Left lung (tissue), 14 donors: ENCODE measurements at regions of chr1 and their contacts with region 1.

Region 1: GRCh38 chr1:150561974-150562445 is 12.8 kb downstream of the ADAMTSL4 start:
- DNase-seq: peak; percentile 86 to 98 (median 96)
- ATAC-seq: peak; percentile 76
- H3K4me3 ChIP-seq: peak overlapping the region; percentile 33 to 50
- H3K27ac ChIP-seq: peak overlapping the region; percentile 100
- H3K4me1 ChIP-seq: peaks cover 61 to 87% of the 10 kb centered on the region in 2 donors
- H3K27me3 ChIP-seq: no peaks in the 10 kb centered on the region
- CTCF ChIP-seq: no peak

Region 2: DNA sequence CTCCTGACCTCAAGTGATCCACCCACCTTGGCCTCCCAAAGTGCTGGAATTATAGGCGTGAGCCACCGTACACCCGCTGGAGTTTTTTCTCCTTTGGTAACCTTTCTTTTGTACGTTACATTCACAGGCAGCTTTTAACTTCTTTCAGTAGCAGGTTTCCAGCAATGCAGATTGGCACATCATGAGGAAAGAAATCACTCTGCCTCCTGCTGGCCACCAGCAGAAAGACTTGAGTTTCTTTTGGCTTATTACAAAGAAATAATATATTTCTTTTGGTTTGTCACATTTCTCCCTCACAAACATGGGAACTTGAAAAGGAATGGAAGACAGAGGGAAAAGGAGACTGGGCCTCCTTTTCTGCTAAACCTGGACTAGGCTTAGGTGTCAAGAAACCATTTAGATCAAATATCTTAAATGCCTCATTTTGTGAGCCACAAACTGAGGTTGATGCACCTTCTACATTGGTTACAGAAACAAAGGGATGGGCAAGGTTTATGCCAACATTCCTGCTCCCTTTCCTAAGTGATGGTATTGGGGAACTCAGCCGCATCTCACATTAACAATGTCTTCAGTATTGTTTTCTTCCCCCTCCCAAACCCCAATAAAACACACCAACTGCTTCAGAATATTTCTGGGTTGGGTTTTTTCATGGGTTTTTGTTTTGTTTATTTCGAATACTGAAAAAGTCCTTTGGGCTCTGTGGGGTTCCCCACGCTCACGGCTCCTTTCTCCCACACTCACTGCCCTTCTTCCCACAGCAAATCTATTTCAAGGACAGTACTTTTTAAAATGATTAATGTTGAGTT is 59.7 kb after region 1 on chr1:
- intact Hi-C with region 1: loop called in 1 of 2 experiments (anchors 5 kb)
- DNase-seq: peak in 3 of 4 donors; percentile 40 to 61 (median 45)
- ATAC-seq: peak; percentile 51
- H3K4me3 ChIP-seq: no peak overlapping the region
- H3K27ac ChIP-seq: peak overlapping the region; percentile 62 to 63
- H3K4me1 ChIP-seq: peaks cover 30 to 81% of the 10 kb centered on the region in 2 donors
- H3K27me3 ChIP-seq: no peaks in the 10 kb centered on the region
- CTCF ChIP-seq: peak; percentile 69 to 74

Region 3: DNA sequence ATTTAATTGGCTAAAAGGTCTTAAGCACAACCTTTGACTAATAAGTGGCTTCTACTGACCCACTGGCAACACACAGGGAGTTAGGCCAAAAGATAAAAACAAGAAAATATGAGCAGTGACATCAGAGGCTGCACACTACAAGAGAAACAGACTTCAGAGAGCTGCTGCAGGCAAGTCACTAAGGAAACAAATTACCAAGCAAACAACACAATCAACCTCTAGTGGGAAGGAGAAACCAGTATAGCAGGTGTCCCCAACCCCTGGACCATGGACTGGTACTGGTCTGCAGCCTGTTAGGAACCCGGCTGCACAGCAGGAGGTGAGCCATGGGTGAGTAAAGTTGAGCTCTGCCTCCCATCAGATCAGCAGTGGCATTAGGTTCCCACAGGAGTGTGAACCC is 88.2 kb after region 1 on chr1:
- intact Hi-C with region 1: no loop called
- DNase-seq: no peak
- ATAC-seq: peak; percentile 87
- H3K4me3 ChIP-seq: no peak overlapping the region
- H3K27ac ChIP-seq: no peak overlapping the region
- H3K4me1 ChIP-seq: peaks cover 0 to 1% of the 10 kb centered on the region in 2 donors
- H3K27me3 ChIP-seq: no peaks in the 10 kb centered on the region
- CTCF ChIP-seq: no peak

Region 4: GRCh38 chr1:150829743-150830142 is 267.7 kb after region 1 on chr1:
- intact Hi-C with region 1: no loop called
- DNase-seq: no peak
- ATAC-seq: no peak
- H3K4me3 ChIP-seq: no peak overlapping the region
- H3K27ac ChIP-seq: no peak overlapping the region
- H3K4me1 ChIP-seq: no peaks in the 10 kb centered on the region
- H3K27me3 ChIP-seq: no peaks in the 10 kb centered on the region
- CTCF ChIP-seq: no peak